ENCODE measurements at regions of chr17 and their contacts with region 1.

Region 1: GRCh38 chr17:64074704-64075426 is 54.4 kb upstream of the ICAM2 start:
- DNase-seq: no peak
- H3K4me3 ChIP-seq: no peak overlapping the region
- H3K27ac ChIP-seq: peak overlapping the region; percentile 26 to 72 (median 42)
- H3K4me1 ChIP-seq: peaks cover 3 to 16% (median 13%) of the 10 kb centered on the region in 4 donors
- H3K27me3 ChIP-seq: no peaks in the 10 kb centered on the region
- CTCF ChIP-seq: no peak
- EP300 ChIP-seq: no peak
- POLR2A ChIP-seq: no peak

Region 2: DNA sequence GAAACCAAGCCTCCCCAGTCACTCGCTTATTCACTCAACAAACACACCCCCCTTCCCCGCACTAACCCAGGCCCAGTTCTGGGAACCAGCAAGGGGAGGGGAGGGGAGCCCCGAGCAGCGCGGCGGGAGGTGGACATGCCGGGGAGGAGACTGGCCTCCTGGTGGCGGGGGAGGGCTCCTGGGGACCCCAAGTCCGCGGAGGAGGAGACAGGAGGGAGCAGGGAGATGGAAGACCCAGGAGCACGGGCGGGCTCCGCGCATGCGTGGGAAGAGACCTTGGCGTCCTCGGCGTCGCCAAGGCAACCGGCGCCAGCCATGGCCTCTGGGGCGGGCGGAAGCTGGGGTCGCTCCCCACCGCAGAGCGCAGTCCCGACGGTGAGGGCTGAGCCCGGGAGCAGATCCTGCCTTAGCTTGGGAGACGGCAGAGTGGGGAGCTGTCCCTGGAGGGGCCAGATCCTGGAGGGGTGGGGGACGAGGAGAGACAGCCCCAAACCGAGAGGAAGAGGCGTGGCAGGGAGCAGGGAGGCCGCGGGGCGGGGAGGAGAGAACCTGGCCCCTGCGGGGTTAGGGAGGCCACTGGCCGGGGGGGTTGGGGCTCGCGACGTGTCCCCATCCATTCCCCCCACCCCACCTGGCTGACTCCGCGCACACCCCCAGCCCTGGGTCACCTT is 76.7 kb before region 1 on chr17 and contains the start of gene PRR29:
- intact Hi-C with region 1: no loop called
- DNase-seq: no peak
- H3K4me3 ChIP-seq: peak within 1 kb of the TSS; percentile 54 to 68 (median 58)
- H3K27ac ChIP-seq: peak within 1 kb of the TSS; percentile 19 to 62 (median 37)
- H3K4me1 ChIP-seq: peaks cover 20 to 31% (median 25%) of the 10 kb centered on the region in 4 donors
- H3K27me3 ChIP-seq: peaks cover 0 to 73% (median 16%) of the 10 kb centered on the region in 4 donors
- CTCF ChIP-seq: no peak
- EP300 ChIP-seq: no peak
- POLR2A ChIP-seq: no peak
- total RNA-seq, gene PRR29: 0.23 to 0.42 (median 0.39) TPM in 3 of 4 donors, not detected in the other

Region 3: GRCh38 chr17:64025732-64026294 is 49.1 kb before region 1 on chr17:
- intact Hi-C with region 1: no loop called
- DNase-seq: no peak
- H3K4me3 ChIP-seq: peak overlapping the region; percentile 9 to 47 (median 17)
- H3K27ac ChIP-seq: no peak overlapping the region
- H3K4me1 ChIP-seq: peaks cover 3 to 14% (median 11%) of the 10 kb centered on the region in 4 donors
- H3K27me3 ChIP-seq: peaks cover 0 to 6% (median 2%) of the 10 kb centered on the region in 4 donors
- CTCF ChIP-seq: peak; percentile 81 to 97 (median 87)
- EP300 ChIP-seq: no peak
- POLR2A ChIP-seq: no peak

Region 4: DNA sequence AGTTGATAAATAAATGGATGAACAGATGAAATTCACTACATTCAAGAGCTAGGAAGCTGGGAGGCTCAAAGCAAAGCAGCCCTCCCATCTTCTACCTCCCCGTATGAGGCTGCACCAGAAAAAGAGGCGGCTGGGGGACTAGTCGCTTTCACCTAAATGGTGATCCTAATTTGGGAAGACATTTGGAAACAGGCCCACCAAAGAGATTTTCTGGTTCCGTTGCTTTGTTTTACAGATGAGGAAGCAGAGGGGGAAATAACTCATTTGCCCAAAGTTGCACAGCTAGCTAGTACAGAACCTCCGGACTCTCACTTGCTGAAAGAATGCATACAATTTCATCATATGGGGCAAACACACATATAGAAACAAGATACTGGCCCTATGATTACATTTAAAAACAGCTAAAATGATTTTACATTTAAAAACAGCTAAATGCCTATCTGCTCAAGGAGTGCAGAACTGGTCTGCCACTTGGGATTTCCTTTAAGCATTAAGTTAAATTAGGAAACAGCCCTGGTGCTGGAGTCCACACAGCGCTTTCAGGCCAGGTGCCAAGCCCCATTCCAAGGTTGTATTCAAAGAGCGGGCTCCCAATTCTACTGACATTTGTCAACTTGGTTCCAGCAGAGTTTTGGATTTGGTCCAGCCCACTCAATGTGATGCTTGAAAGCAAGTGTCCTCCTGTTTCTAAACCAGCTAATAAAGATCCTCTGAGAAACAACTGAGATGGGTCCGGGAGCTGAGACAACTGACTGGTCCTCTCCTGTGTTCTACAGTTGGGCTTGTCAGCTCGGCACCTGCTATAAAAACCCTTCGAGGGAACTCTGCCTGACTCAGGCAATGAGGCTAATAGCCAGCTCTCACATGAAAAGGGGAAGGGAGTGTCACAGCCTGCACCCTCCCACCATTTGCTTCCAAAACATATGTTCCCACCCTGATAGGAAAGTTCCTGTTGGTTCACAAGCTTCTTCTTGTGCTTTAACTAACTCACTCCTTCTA is 43.4 kb after region 1 on chr17:
- intact Hi-C with region 1: loop called (anchors 5 kb)
- DNase-seq: no peak
- H3K4me3 ChIP-seq: peak overlapping the region in 1 of 4 donors; percentile 24
- H3K27ac ChIP-seq: peak overlapping the region in 3 of 4 donors; percentile 11 to 55 (median 46)
- H3K4me1 ChIP-seq: peaks cover 15 to 28% (median 18%) of the 10 kb centered on the region in 4 donors
- H3K27me3 ChIP-seq: no peaks in the 10 kb centered on the region
- CTCF ChIP-seq: no peak
- EP300 ChIP-seq: no peak
- POLR2A ChIP-seq: no peak